ENCODE measurements at regions of chr1 and their contacts with region 1.

Region 1: DNA sequence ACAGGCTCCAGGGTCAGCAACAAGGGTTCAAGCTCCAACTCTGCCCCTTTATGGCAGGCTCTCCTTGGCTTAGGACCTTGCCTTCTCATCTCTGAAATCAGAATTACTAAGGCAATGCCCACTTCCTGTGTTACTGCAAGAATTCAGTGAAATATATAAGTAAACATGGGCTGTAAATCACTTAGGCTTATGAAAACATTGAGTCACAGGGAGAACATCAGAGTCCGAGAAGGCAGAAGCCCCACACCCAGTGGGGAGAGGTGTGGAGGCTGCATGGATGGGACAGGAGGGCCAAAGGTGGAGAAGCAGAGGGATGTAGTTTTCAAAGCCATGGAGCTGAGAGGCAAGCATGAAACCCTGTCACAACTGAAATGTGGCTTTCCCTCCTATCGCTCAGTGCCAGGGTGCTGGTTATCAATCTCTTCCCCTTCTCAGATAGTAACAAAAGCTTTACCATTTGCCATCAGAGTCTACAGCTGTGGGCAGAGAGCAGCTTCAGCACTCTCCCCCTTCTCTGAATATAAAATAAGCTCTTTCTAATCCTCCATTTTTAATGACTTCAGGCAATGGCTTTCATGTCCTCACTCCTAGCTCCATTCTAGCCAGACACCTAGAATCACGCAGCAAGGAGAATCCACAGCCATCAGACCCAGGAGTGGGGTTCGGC is 3.4 kb downstream of the RGS8 start:
- DNase-seq: no peak
- ATAC-seq: no peak

Region 2: DNA sequence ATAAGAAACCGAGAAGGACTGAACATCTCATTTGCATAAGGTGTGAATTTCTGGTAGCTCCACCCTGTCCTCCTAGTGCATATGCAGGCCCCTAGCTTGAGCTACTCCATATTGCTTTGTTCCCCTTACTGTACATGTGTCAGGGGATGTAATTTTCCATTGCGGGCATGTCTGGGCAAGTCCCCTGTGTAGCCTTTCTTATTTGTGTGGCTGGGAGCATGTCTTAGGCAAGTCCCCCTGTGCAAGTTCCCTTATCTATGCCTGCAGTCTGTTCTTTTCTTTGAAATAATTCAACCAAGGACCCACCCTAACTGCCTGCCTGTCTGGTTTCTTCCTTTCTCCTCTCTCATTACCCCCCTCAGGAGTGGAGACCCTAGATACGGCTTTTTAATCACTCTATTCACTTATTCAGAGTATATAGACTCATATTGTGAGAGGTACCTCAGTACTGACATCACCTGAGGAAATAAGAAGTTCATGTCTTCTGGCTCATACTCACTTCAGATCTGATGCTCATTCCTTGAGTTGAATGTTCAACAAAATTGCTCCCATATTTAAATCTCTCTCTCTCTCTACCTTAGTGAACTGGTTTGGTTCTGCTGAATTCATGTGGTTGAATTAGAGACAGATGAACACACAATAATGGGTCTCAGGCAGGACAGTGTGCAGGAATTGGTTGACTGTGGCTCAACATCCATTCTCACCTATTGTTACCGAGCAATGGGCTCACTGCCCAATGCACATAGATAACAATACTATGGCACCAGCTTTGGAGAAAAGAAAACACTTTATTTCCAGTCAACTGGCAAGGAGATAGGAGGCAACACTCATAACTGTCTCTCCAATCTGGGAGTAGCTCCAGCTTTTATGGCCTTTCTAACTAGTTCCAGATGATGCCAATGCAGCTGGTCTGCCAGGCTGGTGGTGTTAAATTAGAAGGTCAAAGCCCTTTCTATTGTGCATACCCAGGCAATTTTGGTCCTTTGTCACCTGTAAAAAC is 80.7 kb after region 1 on chr1:
- intact Hi-C with region 1: loop called in 1 of 2 experiments (anchors 10 kb)
- DNase-seq: no peak
- ATAC-seq: peak in 1 of 2 donors; percentile 19